ENCODE measurements at regions of chr9 and their contacts with region 1.

Region 1: GRCh38 chr9:126398403-126399058 is 71.9 kb downstream of the MVB12B start:
- DNase-seq: peak; percentile 23 to 84 (median 62)
- ATAC-seq: peak in 3 of 4 experiments; percentile 44 to 53 (median 50)
- H3K4me3 ChIP-seq: no peak overlapping the region
- H3K4me3 Mint-ChIP-seq: peak overlapping the region in 2 of 3 donors; percentile 36 to 49
- H3K27ac ChIP-seq: peak overlapping the region; percentile 81
- H3K27ac Mint-ChIP-seq: peak overlapping the region; percentile 19 to 52
- H3K4me1 ChIP-seq: peaks cover 3 to 37% of the 10 kb centered on the region in 2 experiments
- H3K4me1 Mint-ChIP-seq: peaks cover 31 to 49% (median 47%) of the 10 kb centered on the region in 3 donors
- H3K27me3 ChIP-seq: no peaks in the 10 kb centered on the region
- H3K27me3 Mint-ChIP-seq: no peaks in the 10 kb centered on the region

Region 2: DNA sequence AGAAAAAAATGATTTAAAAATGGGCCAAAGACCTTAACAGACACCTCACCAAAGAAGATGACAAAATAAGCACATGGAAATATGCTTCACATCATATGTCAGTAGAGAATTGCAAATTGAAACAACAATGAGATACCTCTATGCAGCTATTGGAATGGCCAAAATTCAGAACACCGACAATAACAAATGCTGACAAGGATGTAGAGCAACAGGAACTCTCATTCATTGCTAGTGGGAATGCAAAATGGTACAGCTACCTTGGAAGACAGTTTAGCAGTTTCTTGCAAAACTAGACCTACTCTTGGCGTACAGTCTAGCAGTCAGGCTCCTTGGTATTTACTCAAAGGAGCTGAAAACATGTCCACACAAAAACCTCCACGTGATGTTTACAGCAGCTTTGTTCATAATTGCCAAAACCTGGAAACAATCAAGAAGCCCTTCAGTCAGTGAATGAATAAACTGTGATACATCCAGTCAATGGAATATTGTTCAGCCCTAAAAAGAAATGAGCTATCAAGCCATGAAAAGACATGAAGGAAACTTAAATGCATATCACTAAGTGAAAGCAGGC is 82.4 kb before region 1 on chr9:
- CTCF ChIA-PET with region 1: interaction called, 4 to 10 read pairs
- POLR2A ChIA-PET with region 1: interaction called in 1 of 2 experiments, 3 read pairs
- DNase-seq: no peak
- ATAC-seq: no peak
- H3K4me3 ChIP-seq: no peak overlapping the region
- H3K4me3 Mint-ChIP-seq: no peak overlapping the region
- H3K27ac ChIP-seq: no peak overlapping the region
- H3K27ac Mint-ChIP-seq: no peak overlapping the region
- H3K4me1 ChIP-seq: no peaks in the 10 kb centered on the region
- H3K4me1 Mint-ChIP-seq: peaks cover 8% of the 10 kb centered on the region in 3 donors
- H3K27me3 ChIP-seq: peaks cover 0 to 7% of the 10 kb centered on the region in 2 experiments
- H3K27me3 Mint-ChIP-seq: peaks cover 0 to 2% of the 10 kb centered on the region in 2 donors

Region 3: DNA sequence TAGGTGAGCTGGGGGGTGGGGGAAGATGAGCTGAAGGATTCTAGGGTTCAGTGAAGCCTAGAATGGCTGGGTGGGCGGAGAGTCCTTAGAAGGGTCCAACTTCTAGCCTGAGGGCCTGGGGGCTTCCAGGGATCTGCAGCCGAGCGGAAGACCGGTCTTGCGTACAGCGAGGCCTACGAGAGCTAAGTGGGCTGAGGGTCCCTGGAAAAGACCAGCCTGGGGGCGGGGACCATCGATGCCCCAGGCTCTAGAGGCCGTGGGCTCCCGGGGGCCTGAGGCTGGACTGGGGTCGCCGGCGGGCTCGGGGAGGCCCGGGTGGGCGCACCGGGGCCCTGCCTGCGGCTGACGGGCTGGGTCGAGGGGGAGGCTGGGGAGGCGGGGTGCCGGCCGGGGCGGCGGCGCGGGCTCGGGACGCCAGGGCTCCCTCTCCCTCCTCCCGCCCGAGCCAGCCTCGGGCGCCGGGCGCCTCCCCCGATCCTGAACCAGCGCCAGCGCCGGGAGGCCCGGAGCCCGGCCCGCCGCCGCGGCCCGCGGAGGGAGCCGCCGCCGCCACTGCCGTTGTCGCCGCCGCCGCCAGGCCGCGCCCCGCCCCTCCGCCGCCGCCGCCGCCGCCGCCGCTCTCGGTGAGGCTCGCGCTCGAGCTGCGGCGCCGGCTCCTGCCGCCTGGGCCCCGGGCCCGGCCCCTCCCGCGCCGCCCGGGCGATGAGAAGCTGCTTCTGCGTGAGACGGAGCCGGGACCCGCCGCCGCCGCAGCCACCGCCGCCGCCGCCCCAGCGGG is 72.1 kb before region 1 on chr9 and contains the start of gene MVB12B:
- CTCF ChIA-PET with region 1: interaction called in 1 of 2 experiments, 10 read pairs
- POLR2A ChIA-PET with region 1: no interaction called
- DNase-seq: peak; percentile 25 to 80 (median 48)
- ATAC-seq: peak; percentile 80 to 85 (median 83)
- H3K4me3 ChIP-seq: peak within 1 kb of the TSS; percentile 60 to 62
- H3K4me3 Mint-ChIP-seq: peak within 1 kb of the TSS; percentile 75 to 82 (median 81)
- H3K27ac ChIP-seq: peak within 1 kb of the TSS; percentile 63
- H3K27ac Mint-ChIP-seq: peak within 1 kb of the TSS; percentile 79 to 89
- H3K4me1 ChIP-seq: peaks cover 0 to 37% of the 10 kb centered on the region in 2 experiments
- H3K4me1 Mint-ChIP-seq: peaks cover 39 to 41% (median 39%) of the 10 kb centered on the region in 3 donors
- H3K27me3 ChIP-seq: peaks cover 0 to 8% of the 10 kb centered on the region in 2 experiments
- H3K27me3 Mint-ChIP-seq: no peaks in the 10 kb centered on the region
- total RNA-seq, gene MVB12B: 8.2 to 25.2 (median 10.6) TPM